ENCODE measurements at regions of chr19 and their contacts with region 1.

Region 1: DNA sequence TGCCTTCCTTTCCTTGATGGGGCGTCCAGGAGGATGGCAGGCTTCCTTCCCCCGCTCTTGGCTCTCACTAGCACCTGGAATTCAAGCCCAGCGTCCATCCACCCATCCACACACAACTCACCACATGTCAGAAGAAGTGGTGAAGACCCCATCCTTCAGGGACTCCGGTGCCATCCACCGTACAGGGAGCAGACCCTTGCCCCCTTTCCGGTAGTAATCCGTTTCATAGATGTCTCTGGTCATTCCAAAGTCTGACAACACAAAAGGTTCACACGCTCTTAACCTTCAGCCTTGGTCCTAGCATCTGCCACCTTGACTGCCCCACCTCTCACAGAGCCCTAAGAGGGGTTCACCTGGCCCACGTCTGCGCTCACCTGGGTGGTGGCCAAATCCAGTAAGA is 51.0 kb downstream of the ZNF557 start:
- DNase-seq: no peak
- ATAC-seq: no peak

Region 2: GRCh38 chr19:6862673-6863078 is 257.8 kb before region 1 on chr19:
- intact Hi-C with region 1: no loop called
- DNase-seq: peak; percentile 74 to 82
- ATAC-seq: peak; percentile 78

Region 3: DNA sequence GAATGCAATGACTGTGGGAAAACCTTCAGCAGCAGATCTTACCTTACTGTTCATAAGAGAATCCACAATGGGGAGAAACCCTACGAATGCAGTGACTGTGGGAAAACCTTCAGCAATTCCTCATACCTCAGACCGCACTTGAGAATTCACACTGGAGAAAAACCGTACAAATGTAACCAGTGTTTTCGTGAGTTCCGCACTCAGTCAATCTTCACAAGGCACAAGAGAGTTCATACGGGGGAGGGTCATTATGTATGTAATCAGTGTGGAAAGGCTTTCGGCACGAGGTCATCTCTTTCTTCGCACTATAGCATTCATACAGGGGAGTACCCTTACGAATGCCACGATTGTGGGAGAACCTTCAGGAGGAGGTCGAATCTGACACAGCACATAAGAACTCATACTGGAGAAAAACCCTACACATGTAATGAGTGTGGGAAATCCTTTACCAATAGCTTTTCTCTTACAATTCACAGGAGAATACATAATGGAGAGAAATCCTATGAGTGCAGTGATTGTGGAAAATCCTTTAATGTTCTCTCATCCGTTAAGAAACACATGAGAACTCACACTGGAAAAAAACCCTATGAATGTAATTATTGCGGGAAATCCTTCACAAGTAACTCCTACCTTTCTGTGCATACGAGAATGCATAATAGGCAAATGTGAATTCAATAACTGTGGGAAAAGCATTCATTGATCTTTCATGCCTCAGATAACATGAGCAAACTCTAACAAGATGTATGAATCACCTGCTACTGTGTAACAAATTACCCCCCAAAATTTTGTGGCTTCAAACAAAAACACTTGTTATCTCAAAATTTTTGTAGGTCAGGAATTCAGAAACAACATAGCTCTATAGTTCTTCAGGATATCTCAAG is 37.2 kb before region 1 on chr19:
- intact Hi-C with region 1: loop called in 1 of 2 experiments (anchors 2 kb)
- DNase-seq: no peak
- ATAC-seq: no peak